MCF 10A (cell line): ENCODE measurements at regions of chr5 and their contacts with region 1.

Region 1: DNA sequence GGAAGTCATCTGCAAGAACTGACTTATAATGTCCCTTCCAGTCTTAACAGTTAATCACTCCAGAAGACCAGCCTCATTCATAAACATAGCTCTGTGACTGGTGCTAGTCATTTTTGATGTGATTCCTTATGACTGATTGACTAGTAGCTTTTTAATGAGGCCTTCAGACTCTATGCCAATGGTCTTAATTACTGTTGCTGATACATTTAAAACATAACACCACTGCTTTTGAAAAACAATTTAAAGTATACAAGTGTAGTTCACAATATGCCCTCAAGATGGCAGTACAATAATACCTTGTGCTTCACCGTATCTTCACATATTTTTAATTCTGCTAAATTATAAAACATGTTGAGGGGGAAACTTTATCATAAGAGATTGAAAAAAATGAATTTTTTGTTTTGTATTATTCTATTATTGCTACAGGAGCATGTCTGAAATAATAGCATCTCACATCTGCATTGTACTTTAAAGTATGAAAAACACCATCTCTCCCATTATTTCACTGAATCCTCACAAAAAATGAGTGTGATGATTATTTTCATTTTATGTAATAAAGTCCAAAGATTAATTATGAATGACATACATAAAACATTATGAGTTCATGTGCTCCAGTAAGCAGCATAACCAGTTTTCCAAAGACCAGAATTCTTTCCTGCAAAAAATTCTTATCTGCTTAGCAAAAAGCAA is 55.2 kb upstream of the SHISAL2B start:
- DNase-seq: peak; percentile 50
- H3K4me3 Mint-ChIP-seq: no peak overlapping the region
- H3K27ac Mint-ChIP-seq: no peak overlapping the region
- H3K4me1 Mint-ChIP-seq: no peaks in the 10 kb centered on the region
- H3K27me3 Mint-ChIP-seq: no peaks in the 10 kb centered on the region
- CTCF ChIP-seq: peak; percentile 71

Region 2: GRCh38 chr5:64646169-64646568 is 11.0 kb after region 1 on chr5:
- CTCF ChIA-PET with region 1: interaction called, 19 read pairs
- POLR2A ChIA-PET with region 1: interaction called, 4 read pairs
- intact Hi-C with region 1: no loop called
- DNase-seq: no peak
- H3K4me3 Mint-ChIP-seq: no peak overlapping the region
- H3K27ac Mint-ChIP-seq: no peak overlapping the region
- H3K4me1 Mint-ChIP-seq: no peaks in the 10 kb centered on the region
- H3K27me3 Mint-ChIP-seq: no peaks in the 10 kb centered on the region
- CTCF ChIP-seq: no peak

Region 3: DNA sequence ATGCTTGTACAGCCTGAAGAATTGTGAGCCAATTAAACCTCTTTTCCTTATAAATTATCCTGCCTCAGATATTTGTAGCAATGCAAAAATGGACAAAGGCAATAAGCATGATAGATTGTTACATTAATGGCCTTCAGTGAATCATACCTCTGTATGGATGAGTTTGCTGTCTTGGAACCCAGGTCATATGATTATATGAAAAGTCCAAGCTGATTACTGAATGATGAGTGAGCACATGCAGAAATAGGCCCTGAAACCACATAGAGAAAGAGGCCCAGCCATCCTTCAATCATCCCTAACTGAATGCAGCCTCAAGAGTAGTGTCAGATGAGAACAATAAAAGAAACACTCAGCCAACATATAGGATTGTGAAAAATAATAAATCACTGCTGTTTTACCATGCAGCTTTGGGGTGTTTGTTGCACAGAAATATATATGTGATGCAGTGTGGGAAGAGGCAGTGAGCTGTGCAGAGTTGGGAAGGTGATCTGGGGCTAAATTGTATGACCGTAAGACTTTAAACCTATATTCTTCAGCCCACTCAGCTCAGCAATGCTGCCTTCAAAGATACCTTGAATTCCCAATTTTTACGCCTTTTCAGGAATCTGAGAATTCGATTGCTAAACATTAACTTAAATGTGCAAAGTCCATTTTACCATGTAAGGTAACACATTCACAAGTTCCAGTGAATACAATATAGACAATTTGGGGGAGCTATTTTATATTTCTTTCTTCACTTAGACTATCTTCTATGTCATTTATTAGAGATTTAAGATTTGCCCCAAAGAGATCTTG is 18.8 kb after region 1 on chr5:
- CTCF ChIA-PET with region 1: interaction called, 14 read pairs
- POLR2A ChIA-PET with region 1: no interaction called
- intact Hi-C with region 1: no loop called
- DNase-seq: no peak
- H3K4me3 Mint-ChIP-seq: no peak overlapping the region
- H3K27ac Mint-ChIP-seq: no peak overlapping the region
- H3K4me1 Mint-ChIP-seq: no peaks in the 10 kb centered on the region
- H3K27me3 Mint-ChIP-seq: no peaks in the 10 kb centered on the region
- CTCF ChIP-seq: no peak

Region 4: DNA sequence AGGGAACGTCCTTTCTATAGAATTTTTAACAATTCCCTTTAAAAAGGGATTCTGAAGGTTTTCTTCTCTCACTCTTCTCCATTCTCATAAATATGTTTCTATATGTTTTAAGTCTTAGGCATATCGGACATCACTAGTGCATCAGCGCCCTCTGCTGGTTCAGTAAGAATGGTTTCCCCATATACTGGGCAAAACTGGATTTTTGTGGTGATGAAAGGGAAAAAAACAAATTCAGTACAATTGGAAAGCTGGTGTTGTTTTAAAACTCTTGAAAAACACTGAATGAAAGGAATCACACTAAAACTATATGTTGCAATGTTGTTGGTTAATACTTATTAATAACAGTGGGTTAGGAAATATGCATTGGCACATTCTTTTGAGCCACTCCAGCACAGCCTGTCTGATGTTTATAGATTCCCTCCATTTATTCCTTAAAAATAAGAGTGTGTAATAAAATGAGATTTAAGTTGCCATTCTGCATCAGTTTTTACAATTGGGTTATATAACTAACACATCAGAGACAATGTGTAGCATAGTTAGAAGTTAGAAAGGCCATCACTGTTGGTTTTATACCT is 149.4 kb after region 1 on chr5:
- CTCF ChIA-PET with region 1: interaction called, 91 read pairs
- POLR2A ChIA-PET with region 1: interaction called, 3 read pairs
- intact Hi-C with region 1: loop called (anchors 1 kb)
- DNase-seq: peak; percentile 83
- H3K4me3 Mint-ChIP-seq: no peak overlapping the region
- H3K27ac Mint-ChIP-seq: no peak overlapping the region
- H3K4me1 Mint-ChIP-seq: peaks cover 5% of the 10 kb centered on the region
- H3K27me3 Mint-ChIP-seq: no peaks in the 10 kb centered on the region
- CTCF ChIP-seq: peak; percentile 73